Activated naive CD4-positive, alpha-beta T cell treated with anti-CD3 and anti-CD28 coated beads for 36 hours (primary cell): ENCODE measurements at regions of chr9 and their contacts with region 1.

Region 1: GRCh38 chr9:75088260-75088905 is at the start of gene OSTF1:
- DNase-seq: peak; percentile 93
- H3K4me3 Mint-ChIP-seq: peak within 1 kb of the TSS; percentile 95
- H3K27ac Mint-ChIP-seq: peak within 1 kb of the TSS; percentile 94
- H3K4me1 Mint-ChIP-seq: peaks cover 61% of the 10 kb centered on the region
- H3K27me3 Mint-ChIP-seq: no peaks in the 10 kb centered on the region
- total RNA-seq, gene OSTF1: 102 to 104 TPM

Region 2: DNA sequence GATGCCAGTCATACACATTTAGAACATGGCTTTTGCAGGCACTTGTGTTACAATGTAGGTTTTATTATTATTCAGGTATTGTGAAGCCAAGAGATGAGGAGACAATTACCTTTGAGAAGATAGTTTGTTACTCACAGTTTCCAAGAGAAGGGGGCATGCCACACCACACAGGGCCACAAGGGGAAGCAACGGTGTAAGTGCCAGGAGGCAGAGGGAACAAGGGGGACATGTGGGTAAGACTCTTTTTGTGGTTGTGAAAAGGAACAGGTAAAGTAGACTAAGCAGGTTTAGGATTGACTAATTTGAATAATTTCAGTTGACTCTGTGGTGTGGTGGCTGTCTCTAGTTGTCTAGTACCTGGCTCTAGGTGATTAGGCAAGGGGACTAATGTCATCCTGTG is 391.9 kb before region 1 on chr9:
- CTCF ChIA-PET with region 1: no interaction called
- intact Hi-C with region 1: no loop called
- DNase-seq: peak; percentile 6
- H3K4me3 Mint-ChIP-seq: no peak overlapping the region
- H3K27ac Mint-ChIP-seq: no peak overlapping the region
- H3K4me1 Mint-ChIP-seq: no peaks in the 10 kb centered on the region
- H3K27me3 Mint-ChIP-seq: peaks cover 26% of the 10 kb centered on the region

Region 3: DNA sequence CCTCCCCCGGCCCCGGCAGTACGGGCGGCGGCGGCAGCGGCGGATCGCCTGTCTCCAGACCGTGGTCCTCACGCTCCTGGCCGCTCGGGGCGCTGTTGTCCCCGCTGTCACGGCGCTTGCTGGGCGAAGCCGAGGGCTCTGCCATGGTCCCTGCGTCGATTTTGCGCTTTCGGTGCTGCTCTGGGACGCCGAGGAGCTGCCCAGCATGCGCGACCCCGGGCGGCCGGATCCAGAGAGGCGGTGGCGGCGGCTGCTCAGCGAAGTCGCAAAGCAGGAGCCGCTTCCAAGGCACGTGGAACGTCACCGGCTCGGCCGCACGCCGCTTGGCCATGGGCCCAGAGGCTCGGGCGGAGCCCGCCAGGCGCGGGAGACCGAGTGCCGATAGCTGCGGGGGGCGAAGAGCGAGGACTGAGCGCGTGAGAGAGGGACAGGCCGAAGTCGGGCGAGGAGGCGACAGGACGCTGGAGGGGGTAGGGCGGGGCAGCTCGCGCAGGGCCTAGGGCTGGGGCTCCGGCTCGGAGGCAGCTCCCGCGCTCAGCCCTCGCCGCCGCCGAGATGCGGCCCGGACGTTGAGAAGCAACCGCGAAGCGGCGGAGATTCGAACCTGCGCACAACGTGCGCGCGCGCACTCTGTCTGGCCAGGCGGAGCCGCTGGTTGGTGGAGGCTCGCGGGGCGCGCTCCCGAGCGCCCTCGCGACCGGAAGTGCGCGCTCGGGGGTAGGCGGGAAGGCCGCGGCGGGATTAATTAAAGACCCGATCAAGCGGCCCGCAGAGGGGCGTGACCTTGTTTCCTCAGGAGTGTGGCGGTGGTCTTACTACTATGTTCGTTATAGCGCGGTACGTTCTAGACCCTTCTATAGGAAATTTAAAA is 135.9 kb before region 1 on chr9 and contains the start of gene C9orf40:
- CTCF ChIA-PET with region 1: interaction called, 8 read pairs
- intact Hi-C with region 1: loop called (anchors 1 kb)
- DNase-seq: peak; percentile 92
- H3K4me3 Mint-ChIP-seq: peak within 1 kb of the TSS; percentile 95
- H3K27ac Mint-ChIP-seq: peak within 1 kb of the TSS; percentile 89
- H3K4me1 Mint-ChIP-seq: peaks cover 26% of the 10 kb centered on the region
- H3K27me3 Mint-ChIP-seq: no peaks in the 10 kb centered on the region
- total RNA-seq, gene C9orf40: 23.1 to 23.9 TPM

Region 4: DNA sequence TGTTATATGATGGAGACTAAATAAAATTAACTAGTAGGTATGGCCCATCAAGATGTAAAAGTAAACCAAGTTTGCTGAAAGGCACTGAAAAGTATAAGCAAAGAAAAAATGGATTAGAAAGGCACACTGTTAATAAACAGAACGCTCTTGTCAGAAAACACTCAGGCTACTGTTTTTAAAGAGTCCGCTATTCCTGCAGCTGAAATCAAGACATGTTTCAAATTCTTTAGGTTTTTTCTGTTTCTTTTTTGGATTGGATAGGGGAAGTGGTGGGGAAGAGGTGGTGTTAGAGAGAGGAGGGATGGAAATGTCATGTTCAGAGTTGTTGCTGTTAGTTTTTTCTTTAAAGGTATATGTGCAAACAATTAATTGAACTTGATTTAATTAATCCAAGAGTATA is 17.5 kb after region 1 on chr9:
- CTCF ChIA-PET with region 1: interaction called, 4 read pairs
- intact Hi-C with region 1: loop called (anchors 2 kb)
- DNase-seq: no peak
- H3K4me3 Mint-ChIP-seq: no peak overlapping the region
- H3K27ac Mint-ChIP-seq: no peak overlapping the region
- H3K4me1 Mint-ChIP-seq: peaks cover 61% of the 10 kb centered on the region
- H3K27me3 Mint-ChIP-seq: no peaks in the 10 kb centered on the region

Region 5: GRCh38 chr9:75148561-75148960 is 60.2 kb after region 1 on chr9:
- CTCF ChIA-PET with region 1: interaction called, 3 read pairs
- intact Hi-C with region 1: loop called (anchors 1 kb)
- DNase-seq: peak; percentile 32
- H3K4me3 Mint-ChIP-seq: no peak overlapping the region
- H3K27ac Mint-ChIP-seq: peak overlapping the region; percentile 83
- H3K4me1 Mint-ChIP-seq: peaks cover 64% of the 10 kb centered on the region
- H3K27me3 Mint-ChIP-seq: no peaks in the 10 kb centered on the region

Region 6: DNA sequence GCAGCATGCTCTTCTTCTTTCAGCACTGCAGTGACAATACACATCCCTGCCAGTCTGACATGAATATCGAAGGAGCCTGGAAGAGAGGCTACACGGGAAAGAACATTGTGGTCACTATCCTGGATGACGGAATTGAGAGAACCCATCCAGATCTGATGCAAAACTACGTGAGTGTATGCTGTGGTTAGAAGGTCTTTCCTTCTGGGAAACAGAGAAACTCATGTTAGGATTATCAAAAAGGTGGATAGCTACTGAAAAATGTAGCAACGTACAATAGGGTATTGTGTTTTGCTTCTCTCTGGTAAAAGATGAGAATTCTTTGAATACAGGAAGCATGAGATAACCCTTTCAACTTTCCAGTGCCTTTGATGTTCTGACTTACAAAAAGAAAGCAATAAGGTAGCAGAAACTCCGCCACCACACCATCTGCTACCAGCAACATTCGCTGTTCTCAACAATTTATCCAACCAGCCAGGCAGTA is 935.4 kb after region 1 on chr9:
- CTCF ChIA-PET with region 1: no interaction called
- intact Hi-C with region 1: loop called (anchors 5 kb)
- DNase-seq: peak; percentile 64
- H3K4me3 Mint-ChIP-seq: peak overlapping the region; percentile 68
- H3K27ac Mint-ChIP-seq: peak overlapping the region; percentile 83
- H3K4me1 Mint-ChIP-seq: peaks cover 92% of the 10 kb centered on the region
- H3K27me3 Mint-ChIP-seq: no peaks in the 10 kb centered on the region